Activated CD4-positive, alpha-beta T cell treated with anti-CD3 and anti-CD28 coated beads, Interleukin-2, amount 10 ng/mL, durations not matched to agents 7 days and 5 days (primary cell): ENCODE measurements at regions of chr1 and their contacts with region 1.

Region 1: GRCh38 chr1:154589780-154590179 is 18.2 kb downstream of the ADAR start:
- DNase-seq: no peak
- H3K4me3 Mint-ChIP-seq: no peak overlapping the region
- H3K27ac Mint-ChIP-seq: no peak overlapping the region
- H3K4me1 Mint-ChIP-seq: peaks cover 3% of the 10 kb centered on the region
- H3K27me3 Mint-ChIP-seq: no peaks in the 10 kb centered on the region

Region 2: DNA sequence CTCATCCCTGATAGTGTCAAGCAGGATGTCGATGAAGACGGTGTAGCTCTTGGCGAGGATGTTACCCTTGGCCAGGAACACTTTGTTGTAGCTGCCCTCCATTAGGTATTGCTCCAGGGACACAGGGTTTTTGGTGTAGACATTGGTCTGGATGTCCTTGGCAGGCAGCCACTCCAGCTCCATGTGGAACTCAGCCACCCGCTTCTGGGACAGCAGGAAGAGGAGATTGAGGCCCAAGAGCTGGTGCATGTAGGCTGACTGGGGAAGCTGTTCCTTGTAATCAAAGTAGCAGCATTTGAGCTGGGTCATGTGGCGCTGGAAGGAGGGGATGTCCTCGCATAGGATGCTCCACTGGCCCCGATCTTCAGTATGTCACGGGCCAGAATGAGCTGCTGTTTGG is 175.2 kb before region 1 on chr1:
- CTCF ChIA-PET with region 1: no interaction called
- POLR2A ChIA-PET with region 1: no interaction called
- DNase-seq: no peak
- H3K4me3 Mint-ChIP-seq: no peak overlapping the region
- H3K27ac Mint-ChIP-seq: no peak overlapping the region
- H3K4me1 Mint-ChIP-seq: peaks cover 41% of the 10 kb centered on the region
- H3K27me3 Mint-ChIP-seq: no peaks in the 10 kb centered on the region

Region 3: DNA sequence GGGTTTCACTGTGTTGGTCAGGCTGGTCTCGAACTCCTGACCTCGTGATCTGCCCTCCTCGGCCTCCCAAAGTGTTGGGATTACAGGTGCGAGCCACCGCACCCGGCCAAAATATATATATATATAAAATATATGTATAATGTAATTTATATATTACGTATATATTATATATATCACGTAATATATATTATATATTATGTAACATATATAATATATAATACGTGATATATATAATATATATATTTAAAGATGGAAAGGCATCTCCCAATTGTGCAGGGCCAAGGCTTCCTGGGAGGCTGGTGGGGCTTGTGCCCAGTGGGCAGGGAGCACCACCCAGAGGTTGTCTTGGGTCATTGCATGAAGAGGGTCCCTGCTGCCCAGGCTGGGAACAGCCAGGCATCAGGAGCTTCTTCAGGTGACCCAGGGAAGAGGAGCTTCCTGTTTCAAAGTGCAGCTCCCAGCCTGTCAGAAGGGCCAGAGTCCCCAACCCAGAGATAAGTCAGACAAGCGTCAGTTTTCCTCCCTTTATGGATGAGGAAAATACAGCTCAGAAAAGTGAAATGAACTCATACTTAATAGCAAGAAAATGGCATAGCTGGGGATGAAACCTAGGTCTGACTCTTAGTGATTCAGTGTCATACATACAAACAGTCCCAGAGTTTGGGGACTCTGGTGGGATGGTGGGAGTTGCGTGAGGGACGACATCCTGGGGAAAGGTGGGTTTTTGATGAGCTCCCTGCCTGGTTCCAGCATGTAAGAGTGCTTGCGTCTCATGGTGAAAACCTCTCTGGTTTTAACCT is 43.3 kb before region 1 on chr1:
- CTCF ChIA-PET with region 1: no interaction called
- POLR2A ChIA-PET with region 1: no interaction called
- DNase-seq: peak; percentile 59
- H3K4me3 Mint-ChIP-seq: no peak overlapping the region
- H3K27ac Mint-ChIP-seq: no peak overlapping the region
- H3K4me1 Mint-ChIP-seq: peaks cover 15% of the 10 kb centered on the region
- H3K27me3 Mint-ChIP-seq: peaks cover 7% of the 10 kb centered on the region

Region 4: GRCh38 chr1:154578058-154578418 is 11.7 kb before region 1 on chr1:
- CTCF ChIA-PET with region 1: interaction called, 12 read pairs
- POLR2A ChIA-PET with region 1: no interaction called
- DNase-seq: no peak
- H3K4me3 Mint-ChIP-seq: no peak overlapping the region
- H3K27ac Mint-ChIP-seq: no peak overlapping the region
- H3K4me1 Mint-ChIP-seq: no peaks in the 10 kb centered on the region
- H3K27me3 Mint-ChIP-seq: peaks cover 2% of the 10 kb centered on the region